ENCODE measurements at regions of chr14 and their contacts with region 1.

Region 1: DNA sequence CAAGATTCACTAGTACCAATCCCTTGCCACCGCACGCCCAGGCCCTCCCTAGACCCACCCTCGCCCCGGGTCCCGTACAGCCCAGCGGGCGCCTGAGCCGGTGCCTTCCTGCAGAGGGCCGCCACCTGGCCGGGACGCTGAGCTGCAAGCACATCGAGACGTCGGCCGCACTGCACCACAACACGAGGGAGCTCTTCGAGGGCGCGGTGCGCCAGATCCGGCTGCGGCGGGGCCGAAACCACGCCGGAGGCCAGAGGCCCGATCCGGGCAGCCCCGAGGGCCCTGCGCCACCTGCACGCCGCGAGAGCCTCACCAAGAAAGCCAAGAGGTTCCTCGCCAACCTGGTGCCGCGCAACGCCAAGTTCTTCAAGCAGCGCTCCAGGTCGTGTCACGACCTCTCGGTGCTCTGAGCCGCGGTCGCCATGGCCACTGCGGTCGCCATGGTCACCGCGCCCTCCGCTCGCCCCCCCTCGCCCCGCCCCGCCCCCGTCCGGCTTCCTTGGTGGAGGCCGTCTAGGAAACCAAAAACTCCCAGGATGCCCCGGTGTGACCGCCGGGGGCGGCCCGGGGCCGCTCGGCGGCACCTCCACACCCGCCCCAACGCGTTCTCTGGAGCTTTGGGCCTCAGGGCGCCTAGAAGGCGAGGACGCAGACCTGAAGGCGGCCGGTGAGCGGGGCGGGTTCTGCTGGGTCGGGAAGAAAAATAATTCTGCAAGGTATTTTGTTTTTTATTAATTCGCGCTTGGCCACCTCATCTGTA is 3.7 kb downstream of the REM2 start:
- DNase-seq: peak; percentile 54 to 78 (median 69)
- H3K4me3 ChIP-seq: peak overlapping the region; percentile 78
- H3K4me3 Mint-ChIP-seq: peak overlapping the region; percentile 82 to 93 (median 87)
- H3K27ac ChIP-seq: peak overlapping the region; percentile 76
- H3K27ac Mint-ChIP-seq: peak overlapping the region; percentile 66 to 94 (median 86)
- H3K4me1 ChIP-seq: peaks cover 55% of the 10 kb centered on the region
- H3K4me1 Mint-ChIP-seq: peaks cover 29 to 65% (median 39%) of the 10 kb centered on the region in 3 donors
- H3K27me3 ChIP-seq: no peaks in the 10 kb centered on the region
- H3K27me3 Mint-ChIP-seq: peaks cover 0 to 1% of the 10 kb centered on the region in 2 donors

Region 2: GRCh38 chr14:22822571-22823098 is 64.0 kb before region 1 on chr14:
- CTCF ChIA-PET with region 1: interaction called, 11 read pairs
- POLR2A ChIA-PET with region 1: interaction called, 6 read pairs
- DNase-seq: peak; percentile 53 to 81 (median 57)
- H3K4me3 ChIP-seq: peak overlapping the region; percentile 13
- H3K4me3 Mint-ChIP-seq: peak overlapping the region in 6 of 7 donors; percentile 41 to 72 (median 66)
- H3K27ac ChIP-seq: no peak overlapping the region
- H3K27ac Mint-ChIP-seq: peak overlapping the region in 1 of 8 donors; percentile 15
- H3K4me1 ChIP-seq: peaks cover 19% of the 10 kb centered on the region
- H3K4me1 Mint-ChIP-seq: peaks cover 8 to 12% (median 9%) of the 10 kb centered on the region in 3 donors
- H3K27me3 ChIP-seq: no peaks in the 10 kb centered on the region
- H3K27me3 Mint-ChIP-seq: peaks cover 35 to 45% of the 10 kb centered on the region in 2 donors

Region 3: GRCh38 chr14:22872033-22872832 is 14.4 kb before region 1 on chr14:
- CTCF ChIA-PET with region 1: interaction called, 110 read pairs
- POLR2A ChIA-PET with region 1: interaction called, 17 read pairs
- DNase-seq: peak; percentile 60 to 78 (median 67)
- H3K4me3 ChIP-seq: peak overlapping the region; percentile 84
- H3K4me3 Mint-ChIP-seq: peak overlapping the region; percentile 93 to 98 (median 94)
- H3K27ac ChIP-seq: peak overlapping the region; percentile 89
- H3K27ac Mint-ChIP-seq: peak overlapping the region; percentile 64 to 99 (median 98)
- H3K4me1 ChIP-seq: peaks cover 24% of the 10 kb centered on the region
- H3K4me1 Mint-ChIP-seq: peaks cover 30 to 39% (median 33%) of the 10 kb centered on the region in 3 donors
- H3K27me3 ChIP-seq: no peaks in the 10 kb centered on the region
- H3K27me3 Mint-ChIP-seq: no peaks in the 10 kb centered on the region

Region 4: GRCh38 chr14:22900081-22900799 is 13.6 kb after region 1 on chr14:
- CTCF ChIA-PET with region 1: interaction called, 49 read pairs
- POLR2A ChIA-PET with region 1: no interaction called
- DNase-seq: peak in 2 of 5 donors; percentile 49 to 57
- H3K4me3 ChIP-seq: no peak overlapping the region
- H3K4me3 Mint-ChIP-seq: no peak overlapping the region
- H3K27ac ChIP-seq: no peak overlapping the region
- H3K27ac Mint-ChIP-seq: peak overlapping the region in 6 of 8 donors; percentile 0 to 65 (median 26)
- H3K4me1 ChIP-seq: peaks cover 7% of the 10 kb centered on the region
- H3K4me1 Mint-ChIP-seq: peaks cover 5 to 10% (median 5%) of the 10 kb centered on the region in 3 donors
- H3K27me3 ChIP-seq: no peaks in the 10 kb centered on the region
- H3K27me3 Mint-ChIP-seq: no peaks in the 10 kb centered on the region

Region 5: DNA sequence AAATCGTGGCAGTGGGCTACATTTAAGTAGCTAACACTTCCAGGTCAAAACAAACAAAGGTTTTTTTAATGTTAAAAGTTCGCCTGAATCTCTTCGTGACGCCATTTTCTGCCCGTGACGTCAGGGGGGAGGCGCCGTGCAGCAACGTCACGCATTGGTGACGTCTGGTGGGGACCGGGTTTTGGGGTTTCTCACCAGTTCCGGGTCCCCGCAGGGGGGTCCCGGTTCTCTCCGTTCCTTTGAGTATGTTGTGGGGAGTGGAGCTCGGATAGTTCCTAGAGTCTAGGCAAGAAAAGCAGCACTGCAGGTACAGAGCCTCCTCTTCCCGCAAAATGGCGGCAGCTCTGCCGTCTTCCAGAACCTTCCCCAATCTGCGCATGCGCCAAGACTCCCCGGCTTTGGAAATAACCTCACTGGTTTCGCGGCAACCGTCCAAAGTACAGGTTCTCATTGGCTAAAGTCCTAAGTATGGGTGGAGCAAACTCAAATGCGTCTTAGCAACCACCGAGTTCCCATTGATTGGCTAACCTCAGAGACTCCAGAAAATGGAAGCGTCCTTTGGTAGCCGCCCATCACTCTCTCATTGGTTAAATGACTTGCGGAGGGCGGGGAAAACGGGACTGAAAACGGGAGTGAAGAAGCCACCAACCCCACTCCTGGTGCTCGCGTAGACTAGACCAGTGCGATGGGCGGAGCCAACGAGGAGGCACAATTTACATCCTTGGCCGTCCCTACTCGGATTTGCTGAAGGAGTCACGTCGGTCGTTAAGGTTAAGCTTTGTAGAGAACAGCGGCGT is 32.3 kb after region 1 on chr14 and contains the start of gene RBM23:
- CTCF ChIA-PET with region 1: interaction called, 5 read pairs
- POLR2A ChIA-PET with region 1: interaction called, 11 read pairs
- DNase-seq: peak; percentile 99 to 100 (median 100)
- H3K4me3 ChIP-seq: peak within 1 kb of the TSS; percentile 95
- H3K4me3 Mint-ChIP-seq: peak within 1 kb of the TSS; percentile 91 to 100 (median 97)
- H3K27ac ChIP-seq: peak within 1 kb of the TSS; percentile 100
- H3K27ac Mint-ChIP-seq: peak within 1 kb of the TSS; percentile 99 to 100 (median 100)
- H3K4me1 ChIP-seq: peaks cover 30% of the 10 kb centered on the region
- H3K4me1 Mint-ChIP-seq: peaks cover 36 to 56% (median 56%) of the 10 kb centered on the region in 3 donors
- H3K27me3 ChIP-seq: no peaks in the 10 kb centered on the region
- H3K27me3 Mint-ChIP-seq: peaks cover 0 to 7% of the 10 kb centered on the region in 2 donors
- total RNA-seq, gene RBM23: 83.6 to 88.8 TPM